ENCODE measurements at regions of chr3 and their contacts with region 1.

Region 1: GRCh38 chr3:101216710-101217465 is 103.5 kb downstream of the IMPG2 start:
- DNase-seq: no peak
- ATAC-seq: no peak
- H3K4me3 Mint-ChIP-seq: no peak overlapping the region
- H3K27ac Mint-ChIP-seq: no peak overlapping the region
- H3K4me1 Mint-ChIP-seq: peaks cover 21% of the 10 kb centered on the region
- H3K27me3 Mint-ChIP-seq: no peaks in the 10 kb centered on the region
- CTCF ChIP-seq: no peak

Region 2: GRCh38 chr3:101102678-101103296 is 114.1 kb before region 1 on chr3:
- CTCF ChIA-PET with region 1: no interaction called
- POLR2A ChIA-PET with region 1: no interaction called
- intact Hi-C with region 1: no loop called
- DNase-seq: no peak
- ATAC-seq: no peak
- H3K4me3 Mint-ChIP-seq: no peak overlapping the region
- H3K27ac Mint-ChIP-seq: no peak overlapping the region
- H3K4me1 Mint-ChIP-seq: no peaks in the 10 kb centered on the region
- H3K27me3 Mint-ChIP-seq: peaks cover 19% of the 10 kb centered on the region
- CTCF ChIP-seq: no peak

Region 3: GRCh38 chr3:101262393-101263240 is 45.7 kb after region 1 on chr3:
- CTCF ChIA-PET with region 1: no interaction called
- POLR2A ChIA-PET with region 1: no interaction called
- intact Hi-C with region 1: no loop called
- DNase-seq: no peak
- ATAC-seq: no peak
- H3K4me3 Mint-ChIP-seq: no peak overlapping the region
- H3K27ac Mint-ChIP-seq: no peak overlapping the region
- H3K4me1 Mint-ChIP-seq: peaks cover 2% of the 10 kb centered on the region
- H3K27me3 Mint-ChIP-seq: no peaks in the 10 kb centered on the region
- CTCF ChIP-seq: no peak

Region 4: GRCh38 chr3:101633176-101633575 is 416.3 kb after region 1 on chr3:
- CTCF ChIA-PET with region 1: no interaction called
- POLR2A ChIA-PET with region 1: no interaction called
- intact Hi-C with region 1: loop called (anchors 5 kb)
- DNase-seq: no peak
- ATAC-seq: no peak
- H3K4me3 Mint-ChIP-seq: no peak overlapping the region
- H3K27ac Mint-ChIP-seq: no peak overlapping the region
- H3K4me1 Mint-ChIP-seq: peaks cover 6% of the 10 kb centered on the region
- H3K27me3 Mint-ChIP-seq: no peaks in the 10 kb centered on the region
- CTCF ChIP-seq: no peak